ENCODE measurements at regions of chr13 and their contacts with region 1.

Region 1: DNA sequence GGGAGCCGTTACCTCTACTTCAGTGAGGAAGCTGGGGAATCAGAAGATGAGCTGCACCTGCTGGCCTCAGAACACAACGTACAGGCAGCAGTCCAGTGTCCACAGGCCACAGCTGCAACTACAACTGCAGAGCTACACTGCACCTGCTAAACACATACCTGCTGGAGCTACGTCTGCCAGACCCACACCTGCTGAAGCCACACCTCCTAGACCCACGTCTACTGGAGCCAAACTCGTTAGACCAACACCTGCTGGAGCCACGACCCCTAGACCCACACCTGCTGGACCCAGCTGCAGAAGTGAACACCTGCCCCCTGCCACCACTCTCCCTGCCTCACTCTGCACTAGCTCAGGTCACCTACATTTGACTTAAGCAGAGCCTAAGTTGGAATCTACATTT is 169.9 kb downstream of the USP12 start:
- DNase-seq: peak in 1 of 2 donors; percentile 37
- H3K4me3 ChIP-seq: no peak overlapping the region
- CTCF ChIP-seq: no peak
- POLR2A ChIP-seq: no peak

Region 2: GRCh38 chr13:26155575-26155974 is 846.1 kb before region 1 on chr13:
- intact Hi-C with region 1: loop called (anchors 5 kb)
- DNase-seq: no peak
- H3K4me3 ChIP-seq: no peak overlapping the region
- CTCF ChIP-seq: no peak
- POLR2A ChIP-seq: no peak

Region 3: GRCh38 chr13:27022571-27023311 is 21.0 kb after region 1 on chr13:
- intact Hi-C with region 1: no loop called
- DNase-seq: peak in 1 of 2 donors; percentile 53
- H3K4me3 ChIP-seq: no peak overlapping the region
- CTCF ChIP-seq: no peak
- POLR2A ChIP-seq: no peak